MCF 10A (cell line): ENCODE measurements at regions of chr4 and their contacts with region 1.

Region 1: GRCh38 chr4:109433205-109434006 is at the start of gene SEC24B:
- DNase-seq: peak; percentile 85
- H3K4me3 Mint-ChIP-seq: peak within 1 kb of the TSS; percentile 81
- H3K27ac Mint-ChIP-seq: peak within 1 kb of the TSS; percentile 83
- H3K4me1 Mint-ChIP-seq: peaks cover 33% of the 10 kb centered on the region
- H3K27me3 Mint-ChIP-seq: no peaks in the 10 kb centered on the region
- CTCF ChIP-seq: peak; percentile 94
- total RNA-seq, gene SEC24B: 33.9 and 35.0 TPM in 2 replicates

Region 2: GRCh38 chr4:109462297-109462696 is 28.9 kb after region 1 on chr4:
- CTCF ChIA-PET with region 1: interaction called, 10 read pairs
- POLR2A ChIA-PET with region 1: interaction called, 6 read pairs
- intact Hi-C with region 1: no loop called
- DNase-seq: no peak
- H3K4me3 Mint-ChIP-seq: no peak overlapping the region
- H3K27ac Mint-ChIP-seq: peak overlapping the region; percentile 71
- H3K4me1 Mint-ChIP-seq: peaks cover 25% of the 10 kb centered on the region
- H3K27me3 Mint-ChIP-seq: no peaks in the 10 kb centered on the region
- CTCF ChIP-seq: no peak

Region 3: DNA sequence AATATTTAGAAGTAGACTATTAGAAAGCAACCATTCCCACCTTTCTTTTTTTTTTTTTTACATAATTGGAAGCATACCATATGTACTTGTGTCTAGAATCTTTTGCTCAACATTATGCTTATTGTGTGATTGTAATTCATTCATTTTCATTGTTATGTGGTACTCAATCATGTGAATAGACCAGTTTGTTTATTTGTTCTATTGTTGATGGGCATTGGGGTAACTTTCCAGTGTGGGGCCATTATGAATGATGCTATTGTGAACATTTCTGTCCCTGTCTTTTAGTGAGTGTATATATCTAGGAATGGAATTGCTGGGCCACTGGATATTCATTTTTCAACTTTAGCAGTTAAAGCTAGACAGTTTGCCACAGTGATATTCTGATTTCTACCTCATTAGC is 64.1 kb after region 1 on chr4:
- CTCF ChIA-PET with region 1: interaction called, 4 read pairs
- POLR2A ChIA-PET with region 1: interaction called, 4 read pairs
- intact Hi-C with region 1: loop called (anchors 10 kb)
- DNase-seq: no peak
- H3K4me3 Mint-ChIP-seq: no peak overlapping the region
- H3K27ac Mint-ChIP-seq: no peak overlapping the region
- H3K4me1 Mint-ChIP-seq: no peaks in the 10 kb centered on the region
- H3K27me3 Mint-ChIP-seq: no peaks in the 10 kb centered on the region
- CTCF ChIP-seq: no peak

Region 4: DNA sequence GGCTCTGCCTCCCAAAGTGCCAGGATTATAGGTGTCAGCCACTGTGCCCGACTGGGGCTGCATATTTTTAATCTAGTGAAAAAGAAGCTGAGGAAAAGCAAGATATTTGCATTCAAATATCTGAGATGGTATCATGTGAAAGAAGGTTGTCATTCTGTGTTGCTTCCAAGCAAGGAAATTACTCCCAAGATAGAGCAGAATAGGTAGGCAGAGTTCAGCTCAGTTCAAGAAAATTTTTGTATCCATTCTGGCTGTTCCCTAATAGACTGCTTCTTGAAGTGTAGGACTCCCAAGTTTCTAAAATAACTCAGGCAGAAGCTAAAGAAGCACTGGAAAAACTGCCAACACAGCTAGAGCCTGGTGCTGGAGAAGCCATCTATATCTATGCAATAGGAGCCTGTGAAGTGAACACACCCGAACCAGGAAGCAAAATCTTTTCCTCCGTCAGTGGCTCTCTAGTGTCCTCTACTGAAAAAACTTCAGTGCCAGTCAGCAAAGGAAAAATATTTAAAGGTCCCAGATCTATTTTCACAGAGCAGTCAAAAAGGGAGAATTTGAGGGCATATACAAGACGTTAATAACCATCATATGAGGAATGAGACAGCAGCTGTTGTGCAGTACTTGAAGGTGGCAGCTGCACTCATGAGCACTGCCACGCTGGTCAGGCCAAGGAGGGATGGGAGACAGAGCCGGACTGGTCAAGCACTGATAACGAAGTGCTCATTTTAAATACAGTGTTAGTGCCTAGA is 140.9 kb after region 1 on chr4:
- CTCF ChIA-PET with region 1: no interaction called
- POLR2A ChIA-PET with region 1: interaction called, 4 read pairs
- intact Hi-C with region 1: loop called (anchors 5 kb)
- DNase-seq: peak; percentile 32
- H3K4me3 Mint-ChIP-seq: no peak overlapping the region
- H3K27ac Mint-ChIP-seq: no peak overlapping the region
- H3K4me1 Mint-ChIP-seq: no peaks in the 10 kb centered on the region
- H3K27me3 Mint-ChIP-seq: no peaks in the 10 kb centered on the region
- CTCF ChIP-seq: no peak

Region 5: GRCh38 chr4:109702950-109703663 is 269.7 kb after region 1 on chr4 and contains the start of gene CASP6:
- CTCF ChIA-PET with region 1: interaction called, 4 read pairs
- POLR2A ChIA-PET with region 1: interaction called, 16 read pairs
- intact Hi-C with region 1: loop called (anchors 1 kb)
- DNase-seq: peak; percentile 79
- H3K4me3 Mint-ChIP-seq: peak within 1 kb of the TSS; percentile 94
- H3K27ac Mint-ChIP-seq: peak within 1 kb of the TSS; percentile 95
- H3K4me1 Mint-ChIP-seq: peaks cover 28% of the 10 kb centered on the region
- H3K27me3 Mint-ChIP-seq: no peaks in the 10 kb centered on the region
- CTCF ChIP-seq: peak; percentile 60
- total RNA-seq, gene CASP6: 7.9 and 8.1 TPM in 2 replicates